GM10248 (cell line): ENCODE measurements at regions of chr3 and their contacts with region 1.

Region 1: DNA sequence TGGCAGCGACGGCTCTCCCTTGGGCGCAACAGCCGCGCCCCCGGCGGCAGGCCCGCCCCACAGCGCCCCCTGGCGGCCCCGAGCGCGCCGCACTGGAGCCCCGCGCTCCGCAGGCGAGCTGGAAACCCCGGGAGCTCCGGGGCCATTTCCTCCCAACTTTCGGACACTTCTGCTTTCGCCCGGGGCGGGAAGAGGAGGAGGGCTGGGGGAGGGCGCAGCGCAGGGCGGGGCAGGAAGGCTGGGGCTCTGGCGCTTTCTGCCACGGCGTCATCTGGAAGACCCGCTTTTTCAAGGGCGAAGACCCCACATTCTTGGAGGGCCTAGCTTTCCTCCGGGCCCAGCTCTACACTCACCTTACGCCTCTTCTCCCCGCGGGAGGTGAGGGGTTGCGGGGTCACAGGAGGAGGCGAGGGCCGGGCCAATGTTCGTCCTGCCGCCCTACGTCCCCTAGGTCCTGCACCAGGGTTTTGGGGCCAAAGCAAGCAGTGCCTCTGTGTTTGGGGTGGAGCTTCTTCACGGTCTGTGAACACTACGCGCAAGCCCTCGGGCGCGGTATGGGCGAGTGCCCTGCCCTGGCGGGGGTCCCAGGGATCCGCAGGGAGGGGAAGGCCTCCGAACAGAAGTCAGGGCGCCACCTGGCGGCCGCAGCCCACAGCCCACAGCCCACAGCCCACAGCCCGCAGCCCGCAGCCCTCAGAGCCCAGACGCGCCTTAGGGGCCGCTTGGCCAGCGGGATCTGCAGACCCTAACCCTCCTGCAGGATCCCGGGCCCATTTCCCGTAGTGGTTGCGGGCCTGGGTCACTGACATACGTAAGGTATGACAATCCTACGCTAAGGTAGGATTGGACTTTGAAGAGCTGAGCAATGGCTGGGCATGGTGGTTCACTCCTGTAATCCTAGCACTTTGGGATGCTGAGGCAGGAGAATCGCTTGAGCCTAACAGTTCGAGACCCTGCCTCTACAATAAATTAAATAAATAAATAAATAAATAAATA is 31.1 kb downstream of the FOXL2 start:
- DNase-seq: peak; percentile 90
- CTCF ChIP-seq: peak; percentile 91

Region 2: GRCh38 chr3:138442433-138442832 is 473.4 kb before region 1 on chr3:
- CTCF ChIA-PET with region 1: no interaction called
- POLR2A ChIA-PET with region 1: no interaction called
- DNase-seq: no peak
- CTCF ChIP-seq: no peak

Region 3: GRCh38 chr3:138608322-138609135 is 307.3 kb before region 1 on chr3 and contains the start of gene FAIM:
- CTCF ChIA-PET with region 1: interaction called, 15 read pairs
- POLR2A ChIA-PET with region 1: interaction called, 3 read pairs
- DNase-seq: peak; percentile 66
- CTCF ChIP-seq: no peak

Region 4: DNA sequence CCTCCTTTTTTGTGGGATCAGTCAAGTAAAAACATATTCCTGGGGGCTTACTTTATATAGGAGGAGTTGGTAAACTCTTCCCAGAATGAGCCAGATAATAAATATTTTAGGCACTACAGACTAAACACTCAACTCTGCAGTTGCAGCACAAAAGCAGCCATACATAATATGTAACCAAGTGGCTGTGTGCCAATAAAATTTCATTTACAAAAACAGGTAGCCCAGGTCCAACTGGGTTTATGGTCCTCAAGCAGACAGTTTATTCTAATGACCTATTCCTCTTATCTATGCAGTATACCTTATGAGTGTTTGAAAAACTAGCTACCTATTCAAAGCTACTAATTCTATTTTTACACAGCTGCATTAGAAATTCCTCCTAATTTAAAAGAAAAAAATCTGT is 245.4 kb before region 1 on chr3:
- CTCF ChIA-PET with region 1: interaction called, 16 read pairs
- POLR2A ChIA-PET with region 1: no interaction called
- DNase-seq: no peak
- CTCF ChIP-seq: no peak

Region 5: GRCh38 chr3:138712086-138712485 is 203.7 kb before region 1 on chr3:
- CTCF ChIA-PET with region 1: interaction called, 433 read pairs
- POLR2A ChIA-PET with region 1: no interaction called
- DNase-seq: no peak
- CTCF ChIP-seq: no peak

Region 6: DNA sequence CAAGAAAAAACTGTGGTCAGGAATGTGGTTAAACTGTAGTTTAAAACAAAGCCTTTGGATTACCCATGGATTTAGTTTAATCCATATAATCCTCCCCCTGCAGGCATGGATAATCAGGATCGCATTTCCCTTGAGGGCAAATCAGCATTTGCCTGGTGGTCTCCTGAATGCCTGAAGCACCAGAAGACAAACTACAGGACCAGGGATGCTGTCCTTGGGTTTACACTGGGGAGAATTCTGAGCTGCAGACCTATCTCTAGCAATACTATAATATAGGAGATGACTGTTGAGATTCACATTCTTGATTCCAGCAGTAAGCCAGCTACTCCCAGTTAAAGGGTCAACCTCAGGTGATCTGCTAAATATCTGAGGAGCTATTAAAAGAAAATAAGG is 91.7 kb before region 1 on chr3:
- CTCF ChIA-PET with region 1: interaction called, 10 read pairs
- POLR2A ChIA-PET with region 1: no interaction called
- DNase-seq: no peak
- CTCF ChIP-seq: no peak

Region 7: DNA sequence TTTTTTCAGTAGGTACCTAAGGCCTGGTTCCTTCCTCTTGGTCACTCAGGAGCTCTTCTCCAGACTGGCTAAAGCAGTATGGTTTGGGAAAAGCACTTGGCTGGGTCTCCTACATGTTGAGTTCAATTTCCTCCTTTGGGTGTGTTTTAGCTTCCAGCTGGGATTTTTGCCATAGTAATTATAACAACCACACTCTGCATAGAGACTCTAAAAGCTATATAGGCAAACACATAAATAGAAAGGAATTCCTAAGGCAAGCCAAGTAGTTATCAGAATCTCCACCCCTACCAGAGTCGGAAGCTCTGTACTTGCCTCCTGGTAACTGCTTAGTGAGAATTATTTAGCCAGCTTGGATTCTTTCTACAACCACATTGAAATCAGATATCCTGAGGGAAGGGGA is 17.5 kb before region 1 on chr3:
- CTCF ChIA-PET with region 1: interaction called, 65 read pairs
- POLR2A ChIA-PET with region 1: no interaction called
- DNase-seq: no peak
- CTCF ChIP-seq: no peak

Region 8: DNA sequence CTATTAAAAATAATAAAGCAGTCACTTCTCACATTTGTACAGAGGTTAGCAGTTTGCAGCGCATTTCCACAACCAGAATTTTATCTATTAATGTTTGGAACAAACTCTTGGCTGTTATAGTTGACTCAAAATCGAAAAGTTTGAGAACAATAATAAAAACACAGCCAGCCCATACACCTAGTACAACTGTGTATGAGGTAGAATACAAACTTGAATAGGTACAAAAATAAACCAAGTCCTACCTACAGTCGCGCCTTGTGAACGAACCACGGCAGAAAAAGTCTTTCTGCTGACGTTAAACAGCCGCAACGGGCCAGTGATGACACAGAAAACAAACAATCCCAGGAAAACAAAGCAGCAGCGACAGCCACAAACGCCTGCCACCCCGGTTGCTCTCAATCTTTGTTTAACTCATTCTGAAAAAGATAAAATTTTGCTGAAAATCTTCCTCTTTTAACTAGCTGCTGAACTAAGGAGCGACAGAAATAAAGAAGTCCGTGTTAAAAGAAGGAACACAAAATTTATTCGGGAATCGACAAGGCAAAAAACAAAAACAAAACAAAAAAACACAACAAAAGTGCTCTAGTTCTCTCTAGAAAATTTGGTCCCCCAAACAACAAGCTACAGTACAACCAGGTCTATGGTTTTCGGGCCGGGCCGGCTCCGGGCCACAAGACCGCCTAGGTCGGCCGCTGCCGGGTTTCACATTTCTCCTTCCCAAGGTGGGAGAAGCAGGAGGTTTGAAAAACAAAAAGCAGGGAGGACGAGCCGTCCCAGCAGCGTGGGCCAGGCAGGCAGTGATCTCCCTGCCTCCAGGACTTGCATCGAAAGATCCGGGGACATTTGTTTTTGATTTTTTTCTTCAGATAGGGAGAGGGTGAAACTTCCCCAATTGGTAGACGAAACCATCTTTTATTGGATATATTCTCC is 28.2 kb after region 1 on chr3:
- CTCF ChIA-PET with region 1: no interaction called
- POLR2A ChIA-PET with region 1: no interaction called
- DNase-seq: no peak
- CTCF ChIP-seq: no peak